ENCODE measurements at regions of chr2 and their contacts with region 1.

Region 1: DNA sequence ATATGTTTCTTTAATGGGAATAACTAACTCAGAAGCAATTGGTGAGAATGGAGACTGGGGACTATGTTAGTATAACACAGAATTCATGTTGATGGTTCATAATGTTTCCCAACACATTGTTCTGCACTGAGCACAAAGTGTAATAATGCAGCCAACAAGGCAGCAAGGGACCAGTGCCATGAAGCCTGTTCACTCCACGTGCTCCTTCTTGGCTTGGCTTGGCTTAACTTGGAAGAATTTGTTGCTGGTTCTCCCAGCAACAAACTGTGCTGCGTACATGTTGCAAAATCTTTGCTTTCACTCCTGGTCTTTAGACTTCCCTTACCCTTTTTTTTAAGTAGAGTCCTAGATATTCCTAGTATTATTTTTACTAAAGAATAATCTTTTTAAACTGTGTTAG is 129.7 kb downstream of the MAP3K20 start:
- DNase-seq: no peak
- H3K4me3 Mint-ChIP-seq: no peak overlapping the region
- H3K27ac Mint-ChIP-seq: no peak overlapping the region
- H3K4me1 Mint-ChIP-seq: peaks cover 2% of the 10 kb centered on the region
- H3K27me3 Mint-ChIP-seq: no peaks in the 10 kb centered on the region

Region 2: GRCh38 chr2:173090276-173090877 is 115.0 kb before region 1 on chr2:
- intact Hi-C with region 1: loop called (anchors 5 kb)
- DNase-seq: no peak
- H3K4me3 Mint-ChIP-seq: no peak overlapping the region
- H3K27ac Mint-ChIP-seq: no peak overlapping the region
- H3K4me1 Mint-ChIP-seq: peaks cover 4% of the 10 kb centered on the region
- H3K27me3 Mint-ChIP-seq: peaks cover 3% of the 10 kb centered on the region

Measured in activated CD4-positive, alpha-beta T cell treated with anti-CD3 and anti-CD28 coated beads, Interleukin-2, amount 10 ng/mL, durations not matched to agents 24 days and 14 days (primary cell).